Right lobe of liver (tissue), 6 donors: ENCODE measurements at regions of chr20 and their contacts with region 1.

Region 1: GRCh38 chr20:63009045-63009961 is 2.5 kb upstream of the BHLHE23 start:
- DNase-seq: peak; percentile 72 to 81 (median 76)
- ATAC-seq: peak; percentile 84 to 94 (median 92)
- H3K4me3 ChIP-seq: no peak overlapping the region
- H3K27ac ChIP-seq: no peak overlapping the region
- H3K4me1 ChIP-seq: peaks cover 0 to 7% (median 0%) of the 10 kb centered on the region in 4 donors
- H3K27me3 ChIP-seq: peaks cover 18 to 55% of the 10 kb centered on the region in 2 donors
- CTCF ChIP-seq: peak; percentile 91 to 95 (median 93)
- POLR2A ChIP-seq: no peak

Region 2: GRCh38 chr20:62822788-62823651 is 186.3 kb before region 1 on chr20:
- intact Hi-C with region 1: loop called in 1 of 2 experiments (anchors 10 kb)
- DNase-seq: peak in 2 of 3 donors; percentile 64 to 72
- ATAC-seq: peak; percentile 35 to 72 (median 64)
- H3K4me3 ChIP-seq: no peak overlapping the region
- H3K27ac ChIP-seq: no peak overlapping the region
- H3K4me1 ChIP-seq: peaks cover 0 to 5% (median 1%) of the 10 kb centered on the region in 4 donors
- H3K27me3 ChIP-seq: no peaks in the 10 kb centered on the region
- CTCF ChIP-seq: peak; percentile 31 to 52 (median 44)
- POLR2A ChIP-seq: no peak

Region 3: DNA sequence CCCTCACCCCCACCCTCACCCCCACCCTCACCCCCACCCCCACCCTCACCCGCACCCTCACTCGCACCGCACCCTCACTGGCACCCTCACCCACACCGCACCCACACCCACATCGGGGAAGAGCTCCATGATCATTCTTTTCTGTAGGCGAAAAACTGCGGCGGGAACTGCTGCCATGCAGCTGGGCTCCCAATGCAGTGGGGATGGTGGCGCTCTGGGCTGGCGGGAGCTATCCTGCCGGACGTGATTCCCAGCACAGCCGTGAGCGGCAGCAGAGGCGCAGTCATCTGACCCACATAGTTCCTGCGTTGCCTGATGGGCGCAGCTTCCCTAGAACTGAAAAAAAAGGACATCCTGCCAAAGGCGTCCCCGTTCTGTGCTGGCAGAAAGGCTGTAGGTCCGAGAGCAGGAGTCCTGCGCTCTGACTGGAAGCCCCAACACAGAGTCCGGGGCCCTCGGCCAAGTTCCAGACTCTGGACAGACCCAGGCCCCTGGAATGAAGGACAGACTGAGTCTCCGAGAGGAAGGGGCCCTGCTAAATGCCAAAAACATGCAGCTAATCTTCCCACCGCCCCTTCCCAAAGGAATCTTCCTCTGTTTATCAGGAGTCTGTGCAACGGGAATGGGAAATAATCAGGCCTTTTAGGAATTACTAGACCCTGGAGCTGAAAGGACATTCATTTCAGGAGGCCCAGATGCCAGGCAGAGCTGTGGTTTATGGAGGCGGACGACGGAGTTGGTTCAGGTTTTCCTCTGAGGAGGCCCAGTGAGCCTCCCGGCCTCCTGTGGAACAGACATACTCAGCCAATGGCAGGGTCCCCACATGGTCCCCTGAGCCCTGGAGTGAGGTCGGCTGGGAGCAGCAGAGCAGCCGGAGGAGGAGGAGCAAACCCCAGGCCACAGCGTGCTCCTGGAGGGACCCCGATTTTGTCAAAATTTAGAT is 133.6 kb before region 1 on chr20:
- intact Hi-C with region 1: loop called in 1 of 2 experiments (anchors 10 kb)
- DNase-seq: peak in 2 of 3 donors; percentile 76 to 80
- ATAC-seq: peak; percentile 75 to 86 (median 78)
- H3K4me3 ChIP-seq: no peak overlapping the region
- H3K27ac ChIP-seq: peak overlapping the region; percentile 23 to 59 (median 31)
- H3K4me1 ChIP-seq: peaks cover 0 to 4% (median 0%) of the 10 kb centered on the region in 4 donors
- H3K27me3 ChIP-seq: no peaks in the 10 kb centered on the region
- CTCF ChIP-seq: peak; percentile 18 to 41 (median 28)
- POLR2A ChIP-seq: no peak

Region 4: GRCh38 chr20:62900052-62900691 is 109.1 kb before region 1 on chr20:
- intact Hi-C with region 1: loop called (anchors 10 kb)
- DNase-seq: peak; percentile 79 to 85 (median 83)
- ATAC-seq: peak; percentile 91 to 97 (median 96)
- H3K4me3 ChIP-seq: no peak overlapping the region
- H3K27ac ChIP-seq: peak overlapping the region in 1 of 3 donors; percentile 13
- H3K4me1 ChIP-seq: peaks cover 0 to 20% (median 3%) of the 10 kb centered on the region in 4 donors
- H3K27me3 ChIP-seq: no peaks in the 10 kb centered on the region
- CTCF ChIP-seq: peak; percentile 86 to 96 (median 88)
- POLR2A ChIP-seq: no peak

Region 5: DNA sequence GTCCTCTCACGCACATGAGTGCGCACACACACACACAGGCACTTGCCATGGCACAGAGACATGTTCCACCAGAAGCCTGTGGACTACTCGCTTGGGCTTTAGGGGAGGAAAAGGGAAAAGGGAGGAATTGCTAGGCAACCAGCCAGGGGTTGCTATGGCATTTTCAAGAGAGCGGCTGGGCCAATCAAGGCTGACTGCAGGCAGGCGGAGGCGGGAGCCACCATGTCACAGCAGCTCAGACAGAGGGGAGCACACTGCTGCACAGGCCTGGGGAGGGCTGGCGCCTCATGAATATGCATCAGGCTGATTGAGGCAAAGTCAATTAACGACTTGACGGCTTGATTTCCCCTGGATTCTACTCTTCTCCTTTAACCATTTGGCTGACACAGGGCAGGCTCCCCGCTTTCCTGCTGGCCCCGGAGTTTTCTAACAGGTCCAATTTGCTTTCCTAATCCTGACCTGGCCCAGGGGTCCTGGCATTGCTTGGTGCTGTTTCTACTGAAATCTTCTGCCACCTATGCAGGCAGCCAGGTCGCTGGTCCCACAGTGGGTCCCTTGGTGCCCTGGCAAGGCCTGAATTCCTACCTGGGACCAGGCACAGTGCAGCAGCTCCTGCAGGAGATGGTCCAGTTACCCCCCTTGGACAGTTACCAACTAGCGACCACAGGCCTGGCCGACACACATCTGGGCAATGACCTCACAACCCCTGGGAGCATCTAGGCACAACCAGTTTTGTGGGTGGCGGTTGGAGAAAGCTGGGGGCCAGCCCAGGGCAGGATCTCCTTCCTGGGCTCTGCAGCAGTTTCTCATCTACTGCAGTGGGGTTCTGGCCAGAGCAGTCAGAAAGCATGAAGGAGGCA is 154.5 kb after region 1 on chr20:
- intact Hi-C with region 1: no loop called
- DNase-seq: no peak
- ATAC-seq: no peak
- H3K4me3 ChIP-seq: no peak overlapping the region
- H3K27ac ChIP-seq: no peak overlapping the region
- H3K4me1 ChIP-seq: no peaks in the 10 kb centered on the region
- H3K27me3 ChIP-seq: no peaks in the 10 kb centered on the region
- CTCF ChIP-seq: no peak
- POLR2A ChIP-seq: no peak